T-cell (primary cell): ENCODE measurements at regions of chr19 and their contacts with region 1.

Region 1: GRCh38 chr19:32224371-32225244 is 120.8 kb upstream of the ZNF507 start:
- DNase-seq: peak in 30 of 35 experiments; percentile 7 to 69 (median 34)
- ATAC-seq: peak; percentile 57 to 73 (median 72)
- H3K4me3 ChIP-seq: peak overlapping the region in 1 of 2 donors; percentile 67
- H3K4me3 Mint-ChIP-seq: peak overlapping the region; percentile 69 to 75 (median 72)
- H3K27ac ChIP-seq: no peak overlapping the region
- H3K27ac Mint-ChIP-seq: no peak overlapping the region
- H3K4me1 ChIP-seq: peaks cover 5 to 13% of the 10 kb centered on the region in 2 experiments
- H3K4me1 Mint-ChIP-seq: peaks cover 13 to 17% (median 15%) of the 10 kb centered on the region in 3 donors
- H3K27me3 ChIP-seq: peaks cover 2 to 58% of the 10 kb centered on the region in 2 experiments
- H3K27me3 Mint-ChIP-seq: peaks cover 31 to 65% of the 10 kb centered on the region in 2 donors

Region 2: GRCh38 chr19:30666301-30666803 is 1558.3 kb before region 1 on chr19:
- CTCF ChIA-PET with region 1: interaction called, 6 to 11 read pairs
- POLR2A ChIA-PET with region 1: no interaction called
- DNase-seq: peak in 23 of 35 experiments; percentile 7 to 50 (median 23)
- ATAC-seq: peak in 1 of 4 experiments; percentile 63
- H3K4me3 ChIP-seq: no peak overlapping the region
- H3K4me3 Mint-ChIP-seq: no peak overlapping the region
- H3K27ac ChIP-seq: no peak overlapping the region
- H3K27ac Mint-ChIP-seq: no peak overlapping the region
- H3K4me1 ChIP-seq: peaks cover 0 to 3% of the 10 kb centered on the region in 2 experiments
- H3K4me1 Mint-ChIP-seq: no peaks in the 10 kb centered on the region
- H3K27me3 ChIP-seq: peaks cover 5 to 55% of the 10 kb centered on the region in 2 experiments
- H3K27me3 Mint-ChIP-seq: peaks cover 37 to 43% of the 10 kb centered on the region in 2 donors

Region 3: DNA sequence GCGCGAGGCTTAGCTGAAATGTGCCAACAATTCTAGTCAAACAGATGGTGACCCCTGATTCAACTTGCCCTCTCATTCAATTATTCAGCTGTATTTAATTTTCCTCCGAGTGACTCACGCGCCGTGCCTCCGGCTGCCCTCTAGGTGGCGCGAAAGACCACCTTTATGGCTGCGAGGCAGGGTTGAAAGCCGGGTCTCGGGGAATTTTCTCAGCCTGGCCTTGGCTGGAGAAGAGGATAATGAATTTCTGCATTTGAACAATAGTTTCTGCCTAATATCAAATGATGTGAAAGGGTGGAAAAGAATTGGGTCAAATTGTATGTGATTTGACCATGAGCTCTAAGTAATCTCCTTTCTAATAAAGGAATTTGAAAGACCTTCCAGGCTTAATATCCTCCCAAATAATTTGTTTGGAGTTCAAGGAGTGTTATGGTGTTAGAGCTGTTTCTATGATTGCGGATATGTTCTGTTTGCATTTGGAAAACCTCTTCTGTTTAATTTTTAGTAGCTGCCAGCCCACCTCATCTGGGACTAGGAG is 1541.5 kb before region 1 on chr19:
- CTCF ChIA-PET with region 1: interaction called, 11 to 13 read pairs
- POLR2A ChIA-PET with region 1: no interaction called
- DNase-seq: peak in 28 of 35 experiments; percentile 6 to 57 (median 28)
- ATAC-seq: no peak
- H3K4me3 ChIP-seq: no peak overlapping the region
- H3K4me3 Mint-ChIP-seq: no peak overlapping the region
- H3K27ac ChIP-seq: no peak overlapping the region
- H3K27ac Mint-ChIP-seq: no peak overlapping the region
- H3K4me1 ChIP-seq: no peaks in the 10 kb centered on the region
- H3K4me1 Mint-ChIP-seq: no peaks in the 10 kb centered on the region
- H3K27me3 ChIP-seq: peaks cover 0 to 47% of the 10 kb centered on the region in 2 experiments
- H3K27me3 Mint-ChIP-seq: peaks cover 50 to 56% of the 10 kb centered on the region in 2 donors

Region 4: DNA sequence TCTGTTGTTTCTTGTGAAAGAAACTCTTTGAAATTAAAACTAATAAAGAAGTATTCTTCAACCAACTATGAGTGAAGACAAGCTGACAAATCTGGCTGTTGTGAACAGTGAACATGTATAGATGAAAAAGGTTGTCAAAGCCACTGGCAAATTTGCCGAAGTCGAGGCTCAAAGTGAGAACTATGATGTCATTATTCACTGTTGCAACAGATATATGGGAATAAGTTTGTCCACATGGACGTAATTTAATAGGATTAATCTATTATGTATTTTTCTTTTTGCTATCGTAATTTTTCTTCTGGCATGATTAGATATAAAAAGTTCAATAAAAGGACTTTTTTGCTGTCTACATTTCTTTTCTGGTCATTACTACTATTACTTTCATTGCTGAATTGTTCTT is 102.4 kb before region 1 on chr19:
- CTCF ChIA-PET with region 1: no interaction called
- POLR2A ChIA-PET with region 1: no interaction called
- DNase-seq: no peak
- ATAC-seq: no peak
- H3K4me3 ChIP-seq: no peak overlapping the region
- H3K4me3 Mint-ChIP-seq: no peak overlapping the region
- H3K27ac ChIP-seq: no peak overlapping the region
- H3K27ac Mint-ChIP-seq: no peak overlapping the region
- H3K4me1 ChIP-seq: no peaks in the 10 kb centered on the region
- H3K4me1 Mint-ChIP-seq: no peaks in the 10 kb centered on the region
- H3K27me3 ChIP-seq: peaks cover 0 to 24% of the 10 kb centered on the region in 2 experiments
- H3K27me3 Mint-ChIP-seq: peaks cover 4 to 13% of the 10 kb centered on the region in 2 donors

Region 5: GRCh38 chr19:32138416-32138815 is 86.2 kb before region 1 on chr19:
- CTCF ChIA-PET with region 1: no interaction called
- POLR2A ChIA-PET with region 1: no interaction called
- DNase-seq: no peak
- ATAC-seq: no peak
- H3K4me3 ChIP-seq: no peak overlapping the region
- H3K4me3 Mint-ChIP-seq: no peak overlapping the region
- H3K27ac ChIP-seq: no peak overlapping the region
- H3K27ac Mint-ChIP-seq: no peak overlapping the region
- H3K4me1 ChIP-seq: no peaks in the 10 kb centered on the region
- H3K4me1 Mint-ChIP-seq: no peaks in the 10 kb centered on the region
- H3K27me3 ChIP-seq: peaks cover 0 to 5% of the 10 kb centered on the region in 2 experiments
- H3K27me3 Mint-ChIP-seq: peaks cover 0 to 4% of the 10 kb centered on the region in 2 donors

Region 6: GRCh38 chr19:32181216-32181920 is 43.2 kb before region 1 on chr19:
- CTCF ChIA-PET with region 1: no interaction called
- POLR2A ChIA-PET with region 1: no interaction called
- DNase-seq: no peak
- ATAC-seq: no peak
- H3K4me3 ChIP-seq: no peak overlapping the region
- H3K4me3 Mint-ChIP-seq: no peak overlapping the region
- H3K27ac ChIP-seq: no peak overlapping the region
- H3K27ac Mint-ChIP-seq: no peak overlapping the region
- H3K4me1 ChIP-seq: no peaks in the 10 kb centered on the region
- H3K4me1 Mint-ChIP-seq: no peaks in the 10 kb centered on the region
- H3K27me3 ChIP-seq: peaks cover 0 to 12% of the 10 kb centered on the region in 2 experiments
- H3K27me3 Mint-ChIP-seq: no peaks in the 10 kb centered on the region

Region 7: DNA sequence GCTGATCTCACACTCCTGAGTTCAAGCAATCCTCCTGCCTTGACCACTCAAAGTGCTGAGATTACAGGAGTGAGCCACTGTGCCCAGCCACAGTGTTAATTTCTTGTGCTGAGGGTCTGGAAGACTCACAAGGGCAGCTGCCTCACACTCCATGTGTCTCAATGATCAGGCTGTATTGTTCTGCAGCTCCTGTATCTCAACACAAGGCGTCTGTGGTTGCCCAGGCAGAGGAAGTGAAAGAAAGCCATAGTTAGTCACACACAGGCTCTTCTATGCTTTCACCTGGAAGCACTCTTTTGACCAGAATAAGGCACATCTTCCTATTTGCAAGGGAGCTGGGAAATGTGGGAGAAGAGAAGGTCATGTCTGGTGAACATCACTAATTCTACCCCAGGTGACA is 13.5 kb after region 1 on chr19:
- CTCF ChIA-PET with region 1: no interaction called
- POLR2A ChIA-PET with region 1: no interaction called
- DNase-seq: no peak
- ATAC-seq: no peak
- H3K4me3 ChIP-seq: no peak overlapping the region
- H3K4me3 Mint-ChIP-seq: no peak overlapping the region
- H3K27ac ChIP-seq: no peak overlapping the region
- H3K27ac Mint-ChIP-seq: no peak overlapping the region
- H3K4me1 ChIP-seq: no peaks in the 10 kb centered on the region
- H3K4me1 Mint-ChIP-seq: no peaks in the 10 kb centered on the region
- H3K27me3 ChIP-seq: peaks cover 0 to 15% of the 10 kb centered on the region in 2 experiments
- H3K27me3 Mint-ChIP-seq: peaks cover 3 to 12% of the 10 kb centered on the region in 2 donors